ENCODE measurements at regions of chr2 and their contacts with region 1.

Region 1: DNA sequence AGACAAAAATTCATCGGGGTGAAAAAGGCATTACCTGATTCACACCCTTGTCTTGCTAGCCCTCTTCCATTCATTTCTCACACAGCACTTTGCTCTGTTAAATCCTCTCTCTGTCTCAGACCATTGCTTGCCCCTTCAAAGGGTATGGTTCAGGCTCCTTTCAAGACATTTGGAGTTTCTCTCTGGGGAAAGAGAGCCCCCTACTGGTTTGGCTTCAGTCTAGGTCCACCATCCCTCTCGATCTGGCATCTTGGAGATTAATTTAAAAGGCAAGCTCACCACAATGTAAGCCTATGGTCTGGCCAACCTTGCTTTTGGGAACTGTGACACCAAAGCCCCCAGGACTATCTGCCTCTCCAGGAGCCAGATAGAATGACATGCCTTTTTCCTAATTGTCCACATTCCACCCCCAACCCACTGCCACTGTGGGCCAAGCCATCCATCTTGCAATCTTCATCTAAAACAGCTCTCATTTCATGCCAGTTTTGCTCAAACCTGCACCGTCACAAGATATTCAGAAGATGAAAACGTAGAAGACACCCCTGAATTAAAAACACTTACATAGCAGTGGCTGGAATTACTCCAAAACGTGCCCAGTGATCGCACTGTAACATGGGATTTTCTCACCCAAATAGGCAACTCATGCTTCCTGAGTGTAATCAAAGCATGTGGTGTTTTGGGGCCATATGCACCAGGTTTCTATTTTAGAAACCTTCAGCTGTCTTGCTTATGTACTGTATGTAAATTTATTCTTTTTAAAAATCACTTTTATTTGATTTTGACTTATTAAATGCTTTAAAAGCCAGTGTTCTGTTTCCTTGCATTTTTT is 93.9 kb downstream of the FARSB start:
- DNase-seq: no peak
- H3K4me3 ChIP-seq: no peak overlapping the region
- H3K27me3 ChIP-seq: no peaks in the 10 kb centered on the region
- CTCF ChIP-seq: peak; percentile 72

Region 2: GRCh38 chr2:222057347-222058073 is 504.5 kb before region 1 on chr2:
- CTCF ChIA-PET with region 1: interaction called, 14 read pairs
- POLR2A ChIA-PET with region 1: no interaction called
- DNase-seq: no peak
- H3K4me3 ChIP-seq: no peak overlapping the region
- H3K27me3 ChIP-seq: peaks cover 6% of the 10 kb centered on the region
- CTCF ChIP-seq: peak; percentile 58

Region 3: GRCh38 chr2:223161873-223162458 is 599.9 kb after region 1 on chr2:
- CTCF ChIA-PET with region 1: no interaction called
- POLR2A ChIA-PET with region 1: no interaction called
- DNase-seq: no peak
- H3K4me3 ChIP-seq: no peak overlapping the region
- H3K27me3 ChIP-seq: no peaks in the 10 kb centered on the region
- CTCF ChIP-seq: no peak

Measured in BJ (cell line).